MCF 10A (cell line): ENCODE measurements at regions of chr1 and their contacts with region 1.

Region 1: DNA sequence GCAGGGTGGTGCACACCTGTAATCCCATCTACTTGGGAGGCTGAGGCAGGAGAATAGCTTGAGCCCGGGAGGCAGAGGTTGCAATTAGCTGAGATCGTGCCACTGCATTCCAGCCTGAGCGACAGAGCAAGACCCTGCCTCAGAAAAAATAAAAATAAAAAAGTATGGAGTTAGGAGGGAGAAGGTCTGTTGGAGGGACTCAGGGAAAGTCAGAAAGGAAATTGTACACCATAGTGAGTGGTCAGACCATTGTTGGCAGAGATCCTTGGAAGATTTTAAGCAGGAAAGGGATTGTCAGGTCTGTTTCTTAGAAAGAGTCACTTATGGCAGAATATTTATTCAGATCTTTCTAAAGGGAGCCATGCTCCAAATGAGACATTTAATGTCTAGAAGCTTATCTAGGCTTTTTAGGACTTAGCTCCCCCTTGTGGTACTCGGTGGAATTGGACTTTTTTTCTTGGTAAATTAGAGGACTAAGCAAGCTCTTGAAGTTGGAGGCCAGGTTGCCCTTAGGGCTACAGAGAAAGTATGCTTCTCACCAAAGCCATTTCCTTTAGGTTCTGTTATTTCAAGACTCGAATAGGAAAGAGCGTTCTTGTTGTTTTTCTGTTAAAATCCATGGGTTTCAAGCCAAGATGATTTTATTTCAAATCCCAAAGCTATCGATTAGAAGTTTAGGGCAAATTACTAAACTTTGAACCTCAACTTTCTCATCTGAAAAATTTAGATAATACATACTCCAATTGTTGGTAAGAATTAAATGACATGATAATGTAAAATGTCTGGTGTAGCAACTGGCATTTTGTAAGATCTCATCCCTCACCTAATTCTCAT is 16.5 kb downstream of the MIA3 start:
- DNase-seq: peak; percentile 97
- H3K4me3 Mint-ChIP-seq: no peak overlapping the region
- H3K27ac Mint-ChIP-seq: peak overlapping the region; percentile 55
- H3K4me1 Mint-ChIP-seq: peaks cover 6% of the 10 kb centered on the region
- H3K27me3 Mint-ChIP-seq: no peaks in the 10 kb centered on the region
- CTCF ChIP-seq: peak; percentile 97

Region 2: GRCh38 chr1:222557148-222557547 is 77.2 kb before region 1 on chr1:
- CTCF ChIA-PET with region 1: interaction called, 12 read pairs
- POLR2A ChIA-PET with region 1: no interaction called
- intact Hi-C with region 1: no loop called
- DNase-seq: peak; percentile 32
- H3K4me3 Mint-ChIP-seq: no peak overlapping the region
- H3K27ac Mint-ChIP-seq: no peak overlapping the region
- H3K4me1 Mint-ChIP-seq: no peaks in the 10 kb centered on the region
- H3K27me3 Mint-ChIP-seq: no peaks in the 10 kb centered on the region
- CTCF ChIP-seq: no peak

Region 3: DNA sequence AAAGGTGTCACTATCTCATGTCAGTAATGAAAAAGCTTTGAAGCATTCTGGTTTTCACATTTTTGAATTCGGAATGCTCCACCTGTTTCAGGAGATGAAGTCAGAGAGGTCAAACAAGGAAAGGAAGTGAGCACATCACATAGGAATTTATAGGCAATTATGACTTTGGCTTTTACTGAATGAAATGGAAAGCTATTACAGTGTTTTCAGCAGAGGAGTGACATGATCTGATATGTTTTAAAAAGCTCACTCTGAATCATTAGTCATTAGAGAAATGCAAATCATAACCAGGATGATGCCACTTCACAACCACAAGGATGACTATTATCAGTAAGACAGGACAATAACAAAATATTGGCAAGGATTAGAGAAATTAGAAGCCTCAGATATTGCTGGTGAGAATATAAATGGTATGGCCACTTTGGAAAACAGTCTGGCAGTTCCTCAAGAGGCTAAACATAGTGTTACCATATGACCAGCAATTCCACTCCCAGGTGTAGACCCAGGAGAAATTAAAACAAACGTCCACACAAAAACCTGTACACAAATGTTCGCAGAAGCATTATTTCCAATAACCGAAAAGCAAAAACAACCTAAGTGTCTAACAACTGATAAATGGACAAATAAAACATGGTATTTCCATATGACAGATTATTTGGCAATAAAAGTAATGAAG is 52.2 kb before region 1 on chr1:
- CTCF ChIA-PET with region 1: interaction called, 12 read pairs
- POLR2A ChIA-PET with region 1: interaction called, 3 read pairs
- intact Hi-C with region 1: no loop called
- DNase-seq: peak; percentile 47
- H3K4me3 Mint-ChIP-seq: no peak overlapping the region
- H3K27ac Mint-ChIP-seq: peak overlapping the region; percentile 82
- H3K4me1 Mint-ChIP-seq: peaks cover 41% of the 10 kb centered on the region
- H3K27me3 Mint-ChIP-seq: no peaks in the 10 kb centered on the region
- CTCF ChIP-seq: no peak

Region 4: DNA sequence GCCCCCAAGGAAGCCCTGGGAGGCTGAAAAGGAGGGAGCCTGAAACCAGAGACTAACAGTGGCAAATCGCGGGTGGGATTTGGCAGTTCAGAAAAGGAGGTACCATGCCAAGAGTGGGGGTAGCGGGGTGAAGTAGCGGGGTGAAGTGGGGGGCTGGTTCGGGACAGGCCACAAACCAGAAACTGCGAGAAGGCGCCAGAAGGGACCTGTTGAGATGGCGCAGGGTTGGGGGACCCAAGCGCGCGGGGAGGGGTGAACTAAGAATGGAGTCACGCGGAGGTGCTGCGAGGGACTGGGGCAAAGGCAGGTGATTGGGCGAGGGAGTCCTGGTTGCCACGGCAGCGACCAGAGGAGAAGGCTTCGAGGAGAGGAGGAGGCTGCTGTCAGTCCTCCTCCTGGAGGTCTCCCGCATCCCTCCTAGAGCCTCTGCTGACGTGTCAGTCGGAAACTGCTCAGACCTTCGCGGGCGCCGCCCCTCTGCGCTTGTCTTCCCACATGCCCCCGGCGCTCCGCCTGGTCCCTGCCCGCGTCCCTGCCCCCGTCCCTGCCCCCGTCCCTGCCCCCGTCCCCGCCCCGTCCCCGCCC is 16.9 kb before region 1 on chr1:
- CTCF ChIA-PET with region 1: interaction called, 81 read pairs
- POLR2A ChIA-PET with region 1: interaction called, 22 read pairs
- intact Hi-C with region 1: no loop called
- DNase-seq: peak; percentile 96
- H3K4me3 Mint-ChIP-seq: peak overlapping the region; percentile 79
- H3K27ac Mint-ChIP-seq: peak overlapping the region; percentile 46
- H3K4me1 Mint-ChIP-seq: peaks cover 27% of the 10 kb centered on the region
- H3K27me3 Mint-ChIP-seq: peaks cover 26% of the 10 kb centered on the region
- CTCF ChIP-seq: no peak

Region 5: GRCh38 chr1:222670110-222670509 is 35.7 kb after region 1 on chr1:
- CTCF ChIA-PET with region 1: no interaction called
- POLR2A ChIA-PET with region 1: no interaction called
- intact Hi-C with region 1: no loop called
- DNase-seq: no peak
- H3K4me3 Mint-ChIP-seq: no peak overlapping the region
- H3K27ac Mint-ChIP-seq: no peak overlapping the region
- H3K4me1 Mint-ChIP-seq: no peaks in the 10 kb centered on the region
- H3K27me3 Mint-ChIP-seq: no peaks in the 10 kb centered on the region
- CTCF ChIP-seq: no peak